PC-9 (cell line): ENCODE measurements at regions of chr19 and their contacts with region 1.

Region 1: DNA sequence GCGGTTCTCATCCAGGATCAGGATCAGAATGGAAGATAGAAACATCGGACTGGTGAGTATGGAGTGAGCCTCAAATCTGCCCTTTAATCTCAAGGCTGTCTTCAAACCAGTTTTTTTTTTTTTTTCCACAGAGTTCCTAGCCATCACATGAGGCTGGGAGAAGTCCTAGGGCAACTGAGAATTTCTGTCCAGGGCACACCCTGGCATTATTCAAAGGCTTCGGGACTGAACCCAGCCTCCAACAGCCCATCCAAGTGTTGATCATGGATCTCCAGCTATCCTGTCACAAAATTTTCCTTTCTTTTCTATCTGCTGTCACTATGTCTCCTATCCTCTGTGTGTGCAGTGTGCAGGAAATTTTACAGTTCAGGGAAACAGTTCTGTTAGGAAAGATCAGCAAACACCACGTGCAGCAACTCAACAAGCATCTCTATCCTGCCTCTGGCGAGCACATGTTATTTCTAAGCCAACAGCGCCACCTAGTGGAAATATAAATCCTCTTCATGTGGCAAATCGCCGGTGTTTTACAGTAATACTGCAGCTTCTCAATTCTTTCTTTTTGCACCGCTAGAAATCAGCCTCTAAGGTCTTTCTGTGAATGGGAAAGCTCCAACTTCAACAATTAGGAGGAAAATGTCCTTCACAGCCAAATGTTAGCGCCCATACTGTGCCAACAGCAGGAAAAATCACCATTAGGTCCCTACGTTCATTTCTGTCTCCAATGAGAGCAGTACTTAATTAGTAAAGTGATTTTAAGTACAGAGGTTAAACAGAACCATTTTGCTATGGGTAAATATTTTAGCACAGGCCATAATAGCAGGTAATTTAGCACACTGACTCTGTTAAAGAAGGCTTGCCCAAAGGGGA is 21.4 kb upstream of the ZNF181 start:
- DNase-seq: peak; percentile 48 to 58
- H3K4me3 ChIP-seq: no peak overlapping the region
- H3K27ac ChIP-seq: no peak overlapping the region
- H3K4me1 ChIP-seq: no peaks in the 10 kb centered on the region
- H3K27me3 ChIP-seq: peaks cover 9% of the 10 kb centered on the region; the same call in 1 of the 2 replicates
- CTCF ChIP-seq: peak; percentile 86

Region 2: DNA sequence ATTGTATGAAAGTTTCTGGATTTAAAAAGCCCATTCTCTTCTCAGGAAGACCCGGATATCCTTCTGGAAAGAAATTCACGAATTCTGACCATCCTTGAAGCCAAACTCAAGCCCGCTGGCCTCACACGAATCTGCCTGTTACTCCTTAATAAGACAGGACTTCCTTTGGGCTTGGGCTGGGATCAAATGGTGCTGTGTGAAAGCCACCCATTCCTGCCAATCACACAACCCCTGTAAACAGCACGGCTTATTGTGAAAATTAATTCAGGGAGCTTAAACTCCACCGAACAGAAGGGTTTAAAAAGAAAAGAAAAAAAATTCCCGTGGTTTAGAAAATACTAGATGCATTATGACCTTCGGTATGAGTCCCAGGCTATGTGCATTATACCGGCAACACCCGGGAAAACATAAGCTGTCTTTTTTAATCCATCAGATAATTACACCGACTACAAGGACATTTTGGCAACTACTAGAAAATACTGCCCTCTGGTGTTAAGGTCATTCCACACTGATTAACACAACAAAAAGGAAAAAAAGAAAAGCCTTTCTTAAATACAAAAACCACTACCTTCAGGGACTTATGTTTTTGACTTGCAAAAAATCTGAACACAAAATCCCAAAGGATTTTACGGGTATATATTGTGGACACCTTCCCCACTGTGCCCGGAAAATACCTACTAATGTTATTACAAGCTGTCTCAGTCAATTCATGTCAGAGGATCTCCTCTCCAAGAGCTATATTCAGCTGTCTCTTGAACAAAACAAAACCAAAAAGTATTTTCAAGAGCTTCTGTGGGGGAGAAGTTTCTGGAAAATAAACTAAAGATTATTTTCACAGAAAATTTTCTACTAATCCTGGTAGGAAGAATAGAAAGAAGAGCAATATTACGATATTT is 616.4 kb before region 1 on chr19:
- CTCF ChIA-PET with region 1: interaction called, 16 read pairs
- POLR2A ChIA-PET with region 1: no interaction called
- intact Hi-C with region 1: no loop called
- DNase-seq: peak in 1 of 2 experiments; percentile 47
- H3K4me3 ChIP-seq: no peak overlapping the region
- H3K27ac ChIP-seq: no peak overlapping the region
- H3K4me1 ChIP-seq: no peaks in the 10 kb centered on the region
- H3K27me3 ChIP-seq: peaks cover 79% of the 10 kb centered on the region
- CTCF ChIP-seq: peak; percentile 72

Region 3: GRCh38 chr19:34501339-34502320 is 211.0 kb before region 1 on chr19:
- CTCF ChIA-PET with region 1: no interaction called
- POLR2A ChIA-PET with region 1: no interaction called
- intact Hi-C with region 1: loop called (anchors 1 kb)
- DNase-seq: peak; percentile 74 to 90
- H3K4me3 ChIP-seq: no peak overlapping the region
- H3K27ac ChIP-seq: no peak overlapping the region
- H3K4me1 ChIP-seq: no peaks in the 10 kb centered on the region
- H3K27me3 ChIP-seq: no peaks in the 10 kb centered on the region
- CTCF ChIP-seq: peak; percentile 96

Region 4: DNA sequence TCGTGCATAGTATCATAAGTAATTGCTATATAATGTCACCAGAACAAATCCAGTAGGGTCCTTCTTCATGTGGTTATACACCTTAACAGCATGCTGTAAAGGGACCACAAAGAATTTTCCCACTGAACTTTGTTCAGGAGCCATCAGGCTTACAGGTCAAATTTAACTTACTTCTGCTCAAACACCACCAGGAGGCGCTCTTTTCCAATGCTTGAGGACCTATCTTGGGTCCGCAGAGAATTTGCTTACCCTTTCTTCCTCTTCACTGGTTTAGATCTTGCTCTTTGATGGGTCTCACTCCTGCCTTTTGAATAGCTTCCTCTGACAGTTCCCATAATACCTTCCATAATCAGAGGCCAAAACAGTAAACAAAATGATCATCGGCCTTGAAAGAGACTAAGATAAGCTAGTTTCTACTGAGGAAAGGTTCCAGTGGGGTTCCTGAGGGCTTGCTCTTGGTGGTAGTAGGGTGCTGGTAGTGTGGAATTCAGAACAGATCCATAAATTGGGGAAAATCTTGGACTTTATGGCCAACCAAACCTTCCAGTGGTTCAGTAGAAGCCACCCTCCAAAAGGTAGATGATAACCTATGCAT is 73.0 kb before region 1 on chr19:
- CTCF ChIA-PET with region 1: no interaction called
- POLR2A ChIA-PET with region 1: no interaction called
- intact Hi-C with region 1: loop called (anchors 1 kb)
- DNase-seq: peak in 1 of 2 experiments; percentile 18
- H3K4me3 ChIP-seq: no peak overlapping the region
- H3K27ac ChIP-seq: no peak overlapping the region
- H3K4me1 ChIP-seq: no peaks in the 10 kb centered on the region
- H3K27me3 ChIP-seq: no peaks in the 10 kb centered on the region
- CTCF ChIP-seq: peak; percentile 77

Region 5: DNA sequence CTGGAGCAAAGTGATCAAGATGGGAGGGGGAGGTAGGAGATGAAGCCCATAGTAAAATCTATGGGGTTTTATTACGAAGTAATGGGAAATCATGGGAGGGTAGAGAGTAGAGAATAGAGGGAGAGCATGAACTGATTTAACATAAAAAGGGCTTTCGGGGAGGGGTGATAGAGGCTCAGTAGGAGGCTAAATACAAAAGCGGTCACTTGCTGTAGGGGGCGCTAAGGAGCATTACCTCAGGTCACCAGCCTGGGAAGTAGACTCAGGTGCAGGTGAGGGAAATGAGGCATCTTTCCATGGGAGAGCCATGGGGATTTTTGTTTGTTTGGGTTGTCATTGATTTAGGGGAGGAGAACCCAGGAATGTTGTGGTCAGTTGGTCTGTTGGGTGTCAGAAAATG is 763.5 kb after region 1 on chr19:
- CTCF ChIA-PET with region 1: no interaction called
- POLR2A ChIA-PET with region 1: no interaction called
- intact Hi-C with region 1: no loop called
- DNase-seq: no peak
- H3K4me3 ChIP-seq: no peak overlapping the region
- H3K27ac ChIP-seq: no peak overlapping the region
- H3K4me1 ChIP-seq: no peaks in the 10 kb centered on the region
- H3K27me3 ChIP-seq: no peaks in the 10 kb centered on the region
- CTCF ChIP-seq: peak; percentile 40; the same call in 1 of the 2 replicates